Posterior vena cava (tissue), 2 donors: ENCODE measurements at regions of chr9 and their contacts with region 1.

Region 1: DNA sequence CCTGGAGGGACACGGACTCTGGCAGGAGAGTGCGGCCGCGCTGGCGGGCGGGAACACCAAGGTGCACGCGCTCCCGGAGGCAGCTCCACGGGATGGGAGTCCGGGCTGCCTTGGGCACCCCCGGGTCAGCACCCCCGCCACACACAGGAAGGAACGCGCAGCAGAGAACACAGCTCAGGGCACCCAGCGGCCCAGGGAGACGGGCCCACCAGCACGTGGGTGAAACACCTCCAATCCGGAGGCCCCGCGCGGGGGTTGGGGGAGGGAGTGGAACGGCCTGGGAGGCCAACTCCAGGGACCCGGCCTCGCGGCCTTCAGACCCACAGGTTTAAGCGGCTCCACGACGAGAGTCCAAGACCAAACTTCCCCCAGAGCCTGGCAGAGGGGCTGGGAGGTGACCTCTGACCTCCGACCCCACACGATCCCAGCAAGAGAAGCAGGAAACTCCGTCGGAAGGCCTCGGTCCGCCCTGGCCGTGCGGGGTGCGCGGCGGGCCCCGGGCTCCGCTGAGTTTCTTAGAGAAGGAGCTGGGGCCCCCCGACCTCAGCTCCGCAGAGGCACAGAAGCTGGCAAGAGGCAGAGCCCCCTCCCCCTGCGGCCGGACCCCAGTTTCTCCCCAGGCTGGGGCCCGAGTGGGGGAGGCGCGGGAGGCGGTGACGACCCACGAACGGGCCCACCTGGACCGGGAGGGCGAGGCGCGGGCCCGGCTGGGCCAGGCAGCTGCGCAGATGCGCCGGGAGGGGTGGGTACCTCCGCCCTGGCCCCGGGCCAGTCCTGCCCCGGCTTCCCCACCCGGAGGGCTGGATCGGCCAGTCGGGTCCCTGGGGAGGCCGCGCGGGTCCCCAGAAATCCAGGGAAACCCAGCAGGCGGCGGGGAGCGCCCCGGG is 851 bp downstream of the NACC2 start:
- DNase-seq: peak; percentile 93

Region 2: DNA sequence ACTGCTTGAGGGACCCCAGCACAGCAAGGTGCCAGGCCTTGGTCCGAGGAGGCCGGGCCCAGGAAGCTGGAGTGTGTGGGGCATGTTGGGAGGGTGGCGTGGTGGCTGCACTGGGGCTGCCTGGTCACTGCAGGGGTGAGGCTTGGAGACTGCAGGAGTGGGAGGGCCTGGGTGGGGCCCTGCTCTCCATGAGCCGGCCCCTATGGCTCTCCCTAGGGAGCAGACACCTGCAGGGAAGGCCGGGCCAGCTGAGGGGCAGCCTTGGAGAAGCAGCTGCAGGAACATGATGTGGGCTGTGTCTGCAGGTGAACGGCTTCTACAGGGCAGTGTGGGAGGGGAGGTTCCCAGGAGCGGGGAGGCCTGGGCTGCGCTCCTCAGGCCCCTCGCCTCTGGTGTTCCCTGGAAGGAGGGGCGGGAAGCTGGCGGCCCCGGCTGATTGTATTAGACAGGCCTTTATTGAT is 66.2 kb after region 1 on chr9:
- intact Hi-C with region 1: no loop called
- DNase-seq: no peak

Region 3: GRCh38 chr9:137000177-137000883 is 906.1 kb after region 1 on chr9:
- intact Hi-C with region 1: loop called in 1 of 2 experiments (anchors 5 kb)
- DNase-seq: no peak